ENCODE measurements at regions of chr7 and their contacts with region 1.

Region 1: DNA sequence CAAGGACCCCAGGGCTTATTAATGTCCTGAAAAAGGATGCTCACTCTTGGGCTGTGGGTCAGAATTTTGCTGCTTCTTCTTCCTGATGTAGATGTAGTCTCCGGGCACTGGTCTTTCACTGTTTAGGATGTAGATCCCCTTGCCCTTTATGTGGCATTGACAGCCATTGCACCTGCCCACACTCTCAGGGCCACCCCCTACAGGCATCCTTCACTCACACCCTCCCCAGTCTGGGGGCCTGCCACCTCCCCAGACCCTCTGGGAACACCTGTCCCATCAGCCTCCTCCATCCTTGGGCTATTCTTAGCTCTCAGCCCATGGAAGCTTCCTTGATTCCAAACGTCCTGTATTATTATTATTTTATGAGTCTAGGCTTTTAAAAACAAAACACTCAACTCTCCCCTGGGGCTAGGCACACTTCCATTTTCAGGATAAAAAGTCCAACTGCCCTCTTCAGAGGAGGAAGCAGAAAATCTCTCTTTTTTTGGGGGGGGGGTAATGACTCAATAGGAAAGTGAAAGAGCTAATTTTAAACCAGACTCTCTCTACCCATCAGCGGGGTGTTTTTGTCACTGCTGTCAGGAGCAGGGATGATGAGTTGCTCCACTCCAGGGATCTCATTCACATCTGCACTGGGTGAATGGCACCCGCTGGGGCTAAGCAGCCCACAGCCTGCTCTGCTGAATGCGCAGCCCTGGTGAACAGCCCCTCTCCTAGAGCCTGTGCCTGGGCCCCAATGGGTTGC is 11.5 kb upstream of the KLRG2 start:
- DNase-seq: peak; percentile 50
- H3K4me3 Mint-ChIP-seq: no peak overlapping the region
- H3K27ac Mint-ChIP-seq: peak overlapping the region; percentile 48
- H3K4me1 Mint-ChIP-seq: peaks cover 27% of the 10 kb centered on the region
- H3K27me3 Mint-ChIP-seq: peaks cover 21% of the 10 kb centered on the region

Region 2: DNA sequence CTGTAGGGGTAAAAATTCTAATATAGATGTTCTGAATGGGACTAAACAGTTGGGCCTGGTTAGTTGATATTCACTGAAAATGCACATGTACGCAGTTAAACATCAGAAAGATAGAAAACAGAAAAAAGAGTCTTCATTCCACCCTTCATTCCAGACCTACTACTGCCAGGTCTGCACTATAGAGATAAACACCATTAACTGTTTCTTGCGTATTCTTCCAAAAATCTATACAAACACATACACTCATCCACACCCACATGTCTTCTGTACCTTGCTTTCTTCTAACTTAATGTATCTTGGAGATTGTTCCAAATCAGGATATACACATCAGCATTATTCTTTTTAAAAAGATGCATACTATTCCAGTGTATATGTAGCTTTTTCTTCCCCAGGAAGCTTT is 14.5 kb after region 1 on chr7:
- CTCF ChIA-PET with region 1: interaction called, 10 read pairs
- POLR2A ChIA-PET with region 1: no interaction called
- DNase-seq: no peak
- H3K4me3 Mint-ChIP-seq: no peak overlapping the region
- H3K27ac Mint-ChIP-seq: no peak overlapping the region
- H3K4me1 Mint-ChIP-seq: no peaks in the 10 kb centered on the region
- H3K27me3 Mint-ChIP-seq: no peaks in the 10 kb centered on the region

Region 3: DNA sequence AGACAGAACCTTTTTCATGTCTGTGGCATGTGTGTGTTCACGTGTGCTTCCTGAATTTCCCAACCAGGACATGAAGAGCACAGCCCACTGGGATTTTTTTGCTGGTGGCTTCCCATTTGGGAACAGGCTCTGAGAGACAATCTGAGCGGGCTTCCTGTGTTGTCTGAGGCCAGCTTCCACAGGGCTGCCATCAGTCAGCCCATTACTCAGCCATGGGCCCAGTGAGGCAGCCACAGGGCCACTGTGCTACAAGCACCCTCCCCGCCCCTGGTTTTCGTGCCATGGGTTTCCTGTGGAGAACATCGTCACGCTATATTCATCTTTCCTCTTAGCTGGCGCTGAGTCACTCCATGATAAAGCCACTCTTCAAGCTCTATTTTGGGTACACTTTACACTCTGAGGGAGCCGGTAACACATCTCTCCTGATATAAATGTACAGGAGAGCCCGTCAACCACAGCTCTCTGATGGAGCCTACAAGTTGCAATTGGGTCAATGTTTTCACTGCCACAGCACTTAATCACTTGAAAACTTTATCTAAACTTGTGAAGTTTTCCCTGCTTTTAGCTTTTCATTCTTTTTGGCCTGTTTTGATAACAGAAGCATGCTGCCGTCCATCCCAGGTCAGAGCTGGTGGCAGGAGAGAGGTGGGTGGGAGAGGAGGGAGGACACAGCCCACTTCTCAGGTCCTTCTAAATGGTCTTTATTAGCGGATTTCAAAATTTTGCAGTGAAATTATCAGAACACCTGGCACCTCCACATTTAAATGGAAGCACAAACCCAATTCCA is 185.9 kb after region 1 on chr7:
- CTCF ChIA-PET with region 1: no interaction called
- POLR2A ChIA-PET with region 1: no interaction called
- DNase-seq: peak; percentile 73
- H3K4me3 Mint-ChIP-seq: peak overlapping the region; percentile 30
- H3K27ac Mint-ChIP-seq: peak overlapping the region; percentile 78
- H3K4me1 Mint-ChIP-seq: peaks cover 53% of the 10 kb centered on the region
- H3K27me3 Mint-ChIP-seq: no peaks in the 10 kb centered on the region